Activated CD4-positive, alpha-beta T cell treated with anti-CD3 and anti-CD28 coated beads, Interleukin-2, amount 10 ng/mL, durations not matched to agents 7 days and 5 days (primary cell): ENCODE measurements at regions of chr2 and their contacts with region 1.

Region 1: DNA sequence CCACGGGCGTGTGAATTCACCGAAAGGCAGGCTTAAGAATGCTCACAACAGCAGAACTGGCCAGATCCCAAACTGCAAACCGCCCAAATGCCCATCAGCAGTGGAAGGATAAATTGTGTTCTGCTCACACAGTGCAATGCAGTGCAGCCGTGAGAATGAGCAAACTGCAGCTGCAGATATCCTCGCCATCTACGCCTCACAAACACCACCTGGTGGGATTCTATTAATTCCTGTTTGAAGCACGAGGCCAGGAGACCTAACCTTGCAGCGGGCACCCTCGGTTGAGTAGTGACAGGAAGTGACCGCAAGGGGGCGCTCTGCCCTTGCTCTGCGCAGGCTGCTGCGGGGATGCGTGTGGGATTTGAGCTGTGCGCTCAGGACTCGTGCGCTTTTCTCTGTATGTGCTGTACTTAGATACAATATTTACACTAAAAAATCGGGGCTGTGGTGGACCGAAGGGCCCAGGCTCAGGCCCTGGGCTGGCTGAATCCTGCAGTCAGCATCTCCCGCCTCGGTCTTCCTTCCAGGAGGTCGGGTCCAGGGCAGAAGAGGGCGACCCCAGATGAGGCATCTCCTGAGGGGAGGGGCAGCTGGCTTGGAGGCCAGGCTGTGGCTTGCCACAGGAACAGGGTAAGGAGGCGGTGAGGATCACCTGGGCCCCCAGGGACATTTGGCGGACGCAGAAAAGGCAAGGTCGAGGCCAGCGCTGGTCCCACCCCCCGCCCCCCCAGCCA is 19.8 kb upstream of the PDIA6 start:
- DNase-seq: peak; percentile 86
- H3K4me3 Mint-ChIP-seq: no peak overlapping the region
- H3K27ac Mint-ChIP-seq: peak overlapping the region; percentile 50
- H3K4me1 Mint-ChIP-seq: peaks cover 7% of the 10 kb centered on the region
- H3K27me3 Mint-ChIP-seq: peaks cover 13% of the 10 kb centered on the region

Region 2: GRCh38 chr2:10982931-10983701 is 150.7 kb after region 1 on chr2:
- CTCF ChIA-PET with region 1: no interaction called
- POLR2A ChIA-PET with region 1: no interaction called
- DNase-seq: no peak
- H3K4me3 Mint-ChIP-seq: no peak overlapping the region
- H3K27ac Mint-ChIP-seq: no peak overlapping the region
- H3K4me1 Mint-ChIP-seq: no peaks in the 10 kb centered on the region
- H3K27me3 Mint-ChIP-seq: no peaks in the 10 kb centered on the region

Region 3: GRCh38 chr2:11124503-11125068 is 292.2 kb after region 1 on chr2:
- CTCF ChIA-PET with region 1: interaction called, 12 read pairs
- POLR2A ChIA-PET with region 1: no interaction called
- DNase-seq: peak; percentile 74
- H3K4me3 Mint-ChIP-seq: no peak overlapping the region
- H3K27ac Mint-ChIP-seq: no peak overlapping the region
- H3K4me1 Mint-ChIP-seq: peaks cover 14% of the 10 kb centered on the region
- H3K27me3 Mint-ChIP-seq: peaks cover 8% of the 10 kb centered on the region